Gastrocnemius medialis (tissue), 4 donors: ENCODE measurements at regions of chr4 and their contacts with region 1.

Region 1: DNA sequence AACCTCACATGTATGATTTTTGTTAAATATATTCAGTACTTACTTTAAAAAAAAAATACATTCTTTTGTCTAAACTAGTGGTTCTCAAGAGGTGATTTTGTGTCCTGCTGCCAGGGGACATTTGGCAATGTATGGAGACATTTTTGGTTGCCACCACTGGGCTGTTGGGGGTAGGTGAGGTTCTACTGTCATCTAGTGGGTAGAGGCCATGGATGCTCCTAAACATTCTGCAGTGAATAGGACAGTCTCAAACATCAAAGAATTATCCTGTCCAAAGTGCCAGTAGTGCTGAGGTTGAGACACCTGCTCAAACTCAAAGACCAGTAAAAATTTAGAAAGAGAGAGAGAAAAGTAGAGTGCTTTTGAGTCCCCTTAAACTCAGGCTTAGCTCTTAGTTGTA is 32.9 kb upstream of the PGM2 start:
- DNase-seq: no peak
- ATAC-seq: peak; percentile 35 to 68
- H3K4me3 ChIP-seq: no peak overlapping the region
- H3K27ac ChIP-seq: no peak overlapping the region
- H3K4me1 ChIP-seq: peaks cover 18 to 21% of the 10 kb centered on the region in 2 donors
- H3K27me3 ChIP-seq: no peaks in the 10 kb centered on the region
- CTCF ChIP-seq: peak; percentile 35 to 71 (median 66)
- POLR2A ChIP-seq: no peak

Region 2: DNA sequence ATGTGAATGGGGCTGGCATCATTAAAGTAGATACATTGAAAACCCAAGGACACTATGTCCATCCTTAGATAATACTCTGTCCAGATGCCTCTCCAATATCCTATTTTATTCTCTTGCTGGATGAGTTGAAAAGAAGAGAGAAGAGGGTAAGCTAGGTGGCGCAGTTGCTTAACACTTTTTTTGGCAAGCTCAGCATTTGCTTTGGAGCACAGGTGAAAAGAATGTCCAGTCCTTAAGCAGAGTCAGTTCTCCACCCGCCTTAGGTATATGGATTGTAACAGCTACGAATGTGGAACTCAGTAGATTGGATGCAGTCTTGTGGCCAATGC is 340.6 kb before region 1 on chr4:
- in situ Hi-C with region 1: no loop called
- intact Hi-C with region 1: loop called (anchors 5 kb)
- DNase-seq: no peak
- ATAC-seq: peak; percentile 74 to 87
- H3K4me3 ChIP-seq: peak overlapping the region; percentile 45 to 69 (median 56)
- H3K27ac ChIP-seq: no peak overlapping the region
- H3K4me1 ChIP-seq: peaks cover 8 to 12% of the 10 kb centered on the region in 2 donors
- H3K27me3 ChIP-seq: peaks cover 15 to 36% (median 17%) of the 10 kb centered on the region in 3 donors
- CTCF ChIP-seq: peak in 2 of 5 experiments; percentile 11 to 36
- POLR2A ChIP-seq: no peak

Region 3: GRCh38 chr4:37603070-37603468 is 190.5 kb before region 1 on chr4:
- in situ Hi-C with region 1: loop called in 3 of 4 experiments (anchors 5 to 10 kb)
- intact Hi-C with region 1: loop called (anchors 1 kb)
- DNase-seq: peak; percentile 63 to 78
- ATAC-seq: peak; percentile 84 to 93
- H3K4me3 ChIP-seq: no peak overlapping the region
- H3K27ac ChIP-seq: no peak overlapping the region
- H3K4me1 ChIP-seq: no peaks in the 10 kb centered on the region
- H3K27me3 ChIP-seq: no peaks in the 10 kb centered on the region
- CTCF ChIP-seq: peak; percentile 95 to 99 (median 98)
- POLR2A ChIP-seq: no peak

Region 4: DNA sequence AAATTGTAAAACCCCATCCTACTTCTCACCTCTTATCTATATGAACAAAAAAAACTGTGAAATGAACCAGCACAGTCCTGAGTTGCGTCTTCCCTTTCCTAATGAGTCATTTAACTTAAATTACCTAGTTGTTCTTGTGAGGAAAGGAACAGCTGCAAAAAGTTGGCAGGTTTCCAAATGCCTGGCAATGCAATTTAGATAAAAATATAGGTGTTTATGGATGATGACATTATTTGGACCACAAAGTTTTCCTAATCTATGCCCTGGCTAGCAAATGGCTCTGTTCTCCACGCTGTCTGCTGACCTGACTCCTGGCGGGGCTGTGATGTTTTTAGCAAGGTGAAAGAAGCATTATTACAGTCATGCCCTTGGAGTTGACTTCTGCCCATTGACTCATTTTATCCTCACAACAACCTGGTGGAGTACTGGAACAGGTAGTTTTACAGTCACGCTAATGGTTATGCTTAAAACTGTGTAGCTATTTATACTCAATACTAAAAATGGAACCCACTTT is 77.6 kb before region 1 on chr4:
- in situ Hi-C with region 1: no loop called
- intact Hi-C with region 1: loop called (anchors 5 kb)
- DNase-seq: peak; percentile 83 to 89
- ATAC-seq: peak; percentile 97 to 98
- H3K4me3 ChIP-seq: no peak overlapping the region
- H3K27ac ChIP-seq: peak overlapping the region; percentile 68 to 83 (median 80)
- H3K4me1 ChIP-seq: peaks cover 10 to 13% of the 10 kb centered on the region in 2 donors
- H3K27me3 ChIP-seq: no peaks in the 10 kb centered on the region
- CTCF ChIP-seq: no peak
- POLR2A ChIP-seq: peak in 1 of 2 donors; percentile 29

Region 5: DNA sequence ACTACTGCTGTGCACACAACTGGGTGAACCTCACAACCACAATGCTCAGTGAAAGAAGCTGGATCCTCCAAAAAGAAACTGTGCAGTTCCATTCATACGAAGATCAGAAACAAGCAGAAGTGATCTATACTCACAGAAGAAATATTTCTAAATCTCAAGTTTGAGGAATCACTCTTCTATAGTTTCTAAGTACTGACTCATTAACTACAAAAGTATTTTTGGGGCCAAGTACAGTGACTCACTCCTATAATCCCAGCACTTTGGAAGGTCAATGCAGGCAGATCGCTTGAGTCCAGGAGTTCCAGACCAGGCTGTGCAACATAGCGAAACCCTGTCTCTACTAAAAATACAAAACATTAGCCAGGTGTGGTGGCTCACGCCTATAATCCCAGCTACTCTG is 56.1 kb before region 1 on chr4:
- in situ Hi-C with region 1: loop called in 1 of 4 experiments (anchors 10 kb)
- intact Hi-C with region 1: no loop called
- DNase-seq: no peak
- ATAC-seq: no peak
- H3K4me3 ChIP-seq: no peak overlapping the region
- H3K27ac ChIP-seq: no peak overlapping the region
- H3K4me1 ChIP-seq: no peaks in the 10 kb centered on the region
- H3K27me3 ChIP-seq: no peaks in the 10 kb centered on the region
- CTCF ChIP-seq: no peak
- POLR2A ChIP-seq: no peak